ENCODE measurements at regions of chr3 and their contacts with region 1.

Region 1: GRCh38 chr3:125202197-125202596 is 10.4 kb downstream of the SLC12A8 start:
- DNase-seq: peak; percentile 67
- H3K4me3 Mint-ChIP-seq: no peak overlapping the region
- H3K27ac Mint-ChIP-seq: no peak overlapping the region
- H3K4me1 Mint-ChIP-seq: no peaks in the 10 kb centered on the region
- H3K27me3 Mint-ChIP-seq: peaks cover 37% of the 10 kb centered on the region

Region 2: GRCh38 chr3:124928333-124929202 is 273.6 kb before region 1 on chr3:
- intact Hi-C with region 1: loop called (anchors 1 kb)
- DNase-seq: peak; percentile 87
- H3K4me3 Mint-ChIP-seq: no peak overlapping the region
- H3K27ac Mint-ChIP-seq: no peak overlapping the region
- H3K4me1 Mint-ChIP-seq: peaks cover 6% of the 10 kb centered on the region
- H3K27me3 Mint-ChIP-seq: peaks cover 44% of the 10 kb centered on the region

Region 3: GRCh38 chr3:124995460-124995994 is 206.7 kb before region 1 on chr3:
- intact Hi-C with region 1: loop called (anchors 1 kb)
- DNase-seq: peak; percentile 87
- H3K4me3 Mint-ChIP-seq: no peak overlapping the region
- H3K27ac Mint-ChIP-seq: no peak overlapping the region
- H3K4me1 Mint-ChIP-seq: peaks cover 13% of the 10 kb centered on the region
- H3K27me3 Mint-ChIP-seq: no peaks in the 10 kb centered on the region

Region 4: DNA sequence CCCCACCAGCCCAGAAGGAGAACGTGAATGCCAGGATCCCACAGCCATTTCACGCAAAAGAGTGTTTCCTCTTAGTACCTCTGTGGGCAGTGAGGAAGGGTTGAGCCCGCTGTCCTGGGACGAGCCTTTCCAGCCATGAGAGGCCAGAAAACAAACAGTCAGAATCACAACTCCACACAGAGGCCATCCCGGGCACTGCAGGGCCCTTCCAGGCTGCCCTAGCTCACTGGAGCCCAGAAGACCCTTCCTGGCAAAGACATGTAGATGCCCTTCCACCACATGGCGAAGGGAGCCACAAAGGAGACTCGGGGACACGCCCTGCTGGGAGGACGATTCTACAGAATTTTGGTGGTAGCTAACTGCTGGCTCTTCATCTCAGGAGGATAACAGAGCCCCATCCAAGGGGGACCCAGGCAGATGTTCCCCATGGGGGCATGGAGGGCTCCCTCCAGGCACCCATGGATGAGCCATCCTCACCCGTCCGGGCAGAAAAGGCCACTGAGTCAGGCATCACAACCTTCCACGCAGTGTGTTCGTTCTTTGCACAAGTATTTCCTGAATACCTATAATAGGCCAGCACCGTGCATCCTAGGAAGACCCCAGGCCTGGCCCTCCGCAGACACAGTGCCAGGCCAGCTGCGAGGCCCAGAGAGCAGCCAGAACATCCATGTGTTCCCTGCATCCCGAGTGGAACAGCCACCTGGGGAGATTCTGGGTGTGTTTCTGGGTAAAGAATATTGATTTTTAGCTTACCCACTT is 36.8 kb before region 1 on chr3:
- intact Hi-C with region 1: loop called (anchors 1 kb)
- DNase-seq: no peak
- H3K4me3 Mint-ChIP-seq: no peak overlapping the region
- H3K27ac Mint-ChIP-seq: no peak overlapping the region
- H3K4me1 Mint-ChIP-seq: peaks cover 2% of the 10 kb centered on the region
- H3K27me3 Mint-ChIP-seq: peaks cover 41% of the 10 kb centered on the region

Region 5: DNA sequence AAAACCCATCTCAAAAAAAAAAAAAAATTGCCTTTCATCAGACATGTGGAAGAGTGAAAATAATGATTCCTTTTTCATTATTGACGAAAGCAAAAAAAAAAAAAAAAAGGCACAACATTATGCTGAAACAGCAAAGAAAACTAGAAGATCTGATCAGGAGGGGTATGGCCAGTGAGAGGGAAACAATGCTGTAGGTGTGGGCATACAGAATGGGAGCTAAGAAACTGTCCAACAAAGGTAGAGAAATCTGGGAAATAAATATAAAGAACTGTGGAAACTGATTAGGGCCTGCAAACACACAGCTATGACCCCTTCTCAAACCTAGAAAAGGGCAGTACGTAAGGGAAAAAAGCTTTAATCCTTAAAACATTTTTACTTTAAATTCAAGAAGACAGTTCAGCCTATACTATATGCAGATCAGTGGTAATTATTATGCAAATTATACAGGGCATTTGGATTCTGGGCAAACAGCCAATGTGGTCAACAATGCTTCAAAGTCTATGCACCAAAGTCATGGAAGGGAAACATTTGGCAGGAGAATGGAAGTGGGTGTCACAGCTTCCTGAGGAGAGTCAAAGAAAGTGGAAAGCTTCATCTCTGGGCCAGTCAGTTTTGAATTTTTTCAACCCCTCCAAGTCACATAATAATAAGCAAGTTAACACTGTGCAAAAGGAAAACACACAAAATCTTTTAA is 78.6 kb after region 1 on chr3:
- intact Hi-C with region 1: no loop called
- DNase-seq: no peak
- H3K4me3 Mint-ChIP-seq: no peak overlapping the region
- H3K27ac Mint-ChIP-seq: no peak overlapping the region
- H3K4me1 Mint-ChIP-seq: peaks cover 3% of the 10 kb centered on the region
- H3K27me3 Mint-ChIP-seq: no peaks in the 10 kb centered on the region

Measured in activated CD4-positive, alpha-beta T cell treated with anti-CD3 and anti-CD28 coated beads, Interleukin-2, amount 10 ng/mL, durations not matched to agents 24 days and 14 days (primary cell).